ENCODE measurements at regions of chr5 and their contacts with region 1.

Region 1: DNA sequence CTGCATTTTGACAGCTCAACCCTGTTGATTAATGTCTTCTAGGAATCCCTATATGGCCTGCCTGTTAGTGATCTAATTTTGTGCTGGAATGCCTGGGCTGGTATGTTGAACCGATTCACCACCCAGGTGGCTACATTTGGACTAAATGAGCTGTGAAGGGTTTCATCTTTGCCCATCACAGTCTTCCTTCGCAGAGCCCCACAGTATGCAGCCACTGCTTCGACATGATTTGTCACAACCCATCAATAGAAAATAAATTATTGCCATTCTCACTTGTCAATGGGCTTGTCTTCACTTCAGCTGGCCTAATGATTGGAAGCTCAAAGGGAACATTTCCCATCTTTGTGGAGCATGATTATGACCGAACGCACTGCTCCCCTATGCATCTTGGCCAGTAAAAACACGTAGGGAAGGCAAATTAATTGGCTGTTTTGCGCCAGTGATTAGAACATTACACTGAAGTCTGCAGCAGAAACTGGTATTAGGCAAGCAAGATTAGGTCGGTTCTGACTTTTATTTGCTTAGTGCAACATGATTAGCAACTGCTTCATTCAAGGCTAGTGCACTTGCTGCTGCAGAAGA is 408.5 kb downstream of the KIAA0825 start:
- H3K4me3 Mint-ChIP-seq: no peak overlapping the region
- H3K27ac Mint-ChIP-seq: no peak overlapping the region
- H3K4me1 Mint-ChIP-seq: no peaks in the 10 kb centered on the region
- H3K27me3 Mint-ChIP-seq: no peaks in the 10 kb centered on the region

Region 2: GRCh38 chr5:93850311-93850710 is 359.6 kb before region 1 on chr5:
- intact Hi-C with region 1: no loop called
- H3K4me3 Mint-ChIP-seq: no peak overlapping the region
- H3K27ac Mint-ChIP-seq: no peak overlapping the region
- H3K4me1 Mint-ChIP-seq: no peaks in the 10 kb centered on the region
- H3K27me3 Mint-ChIP-seq: no peaks in the 10 kb centered on the region

Region 3: DNA sequence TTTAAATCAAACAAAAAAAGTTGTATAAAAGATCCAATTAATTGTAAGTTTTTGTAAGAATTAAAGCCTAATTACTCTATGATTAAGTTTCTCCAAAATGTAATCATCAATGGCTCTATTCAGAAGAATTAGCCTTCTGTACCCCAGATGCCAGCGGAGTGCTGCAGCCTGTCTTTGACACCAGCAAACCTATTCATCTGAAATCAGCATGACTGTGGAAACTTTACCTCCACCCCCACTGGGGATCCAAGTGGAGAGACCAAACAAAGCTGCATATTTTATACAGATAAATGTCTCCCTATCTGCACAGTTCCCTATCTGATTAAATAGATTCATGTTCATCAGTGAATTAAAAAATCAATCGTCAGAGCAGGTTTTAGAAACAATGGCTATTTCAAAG is 18.3 kb before region 1 on chr5:
- intact Hi-C with region 1: loop called (anchors 1 kb)
- H3K4me3 Mint-ChIP-seq: no peak overlapping the region
- H3K27ac Mint-ChIP-seq: no peak overlapping the region
- H3K4me1 Mint-ChIP-seq: no peaks in the 10 kb centered on the region
- H3K27me3 Mint-ChIP-seq: no peaks in the 10 kb centered on the region